ENCODE measurements at regions of chr3 and their contacts with region 1.

Region 1: DNA sequence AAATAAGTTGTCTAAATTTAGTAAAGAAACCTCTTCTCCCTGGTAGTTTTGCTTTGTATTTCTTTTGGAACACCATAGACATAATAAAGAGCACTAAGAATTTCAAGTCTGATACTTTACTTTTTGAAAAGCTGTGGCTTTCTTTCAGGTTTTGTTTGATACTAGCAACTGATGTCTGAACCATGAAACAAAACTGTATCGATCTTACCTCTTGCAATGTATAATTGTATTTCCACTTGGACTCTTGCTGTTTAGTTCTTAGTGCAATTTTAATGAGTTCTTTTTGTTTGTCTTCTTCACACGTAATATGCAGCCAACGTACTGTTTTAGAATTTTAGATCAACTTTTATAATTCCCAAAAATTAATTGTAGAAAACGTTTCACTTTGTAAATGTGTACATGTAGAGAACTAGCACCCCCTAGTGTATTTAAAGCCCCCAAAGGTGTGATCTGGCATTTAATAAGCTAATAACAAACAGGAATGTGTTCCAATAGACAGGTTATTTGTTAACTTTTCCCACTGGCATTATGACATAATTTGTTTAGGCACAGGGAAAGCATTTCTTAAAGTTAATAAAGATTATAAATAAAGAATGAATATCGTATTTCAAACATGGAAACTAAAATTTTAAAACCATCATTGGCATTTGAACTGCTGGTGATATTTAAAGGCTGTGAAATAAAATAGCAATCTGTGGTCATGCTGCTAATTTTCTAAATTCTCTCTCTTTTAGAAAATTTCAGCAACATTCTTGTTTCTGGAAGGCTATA is 289.1 kb upstream of the DNAJC19 start:
- DNase-seq: peak in 1 of 14 experiments; percentile 15
- ATAC-seq: no peak
- H3K4me3 ChIP-seq: no peak overlapping the region
- H3K4me3 Mint-ChIP-seq: no peak overlapping the region
- H3K27ac ChIP-seq: no peak overlapping the region
- H3K27ac Mint-ChIP-seq: no peak overlapping the region
- H3K4me1 ChIP-seq: no peaks in the 10 kb centered on the region
- H3K4me1 Mint-ChIP-seq: no peaks in the 10 kb centered on the region
- H3K27me3 ChIP-seq: no peaks in the 10 kb centered on the region
- H3K27me3 Mint-ChIP-seq: peaks cover 14% of the 10 kb centered on the region
- CTCF ChIP-seq: no peak

Region 2: GRCh38 chr3:179929091-179929529 is 1349.5 kb before region 1 on chr3:
- CTCF ChIA-PET with region 1: no interaction called
- POLR2A ChIA-PET with region 1: no interaction called
- intact Hi-C with region 1: loop called (anchors 5 to 10 kb)
- DNase-seq: peak in 13 of 14 experiments; percentile 5 to 52 (median 13)
- ATAC-seq: peak; percentile 34
- H3K4me3 ChIP-seq: no peak overlapping the region
- H3K4me3 Mint-ChIP-seq: no peak overlapping the region
- H3K27ac ChIP-seq: no peak overlapping the region
- H3K27ac Mint-ChIP-seq: no peak overlapping the region
- H3K4me1 ChIP-seq: no peaks in the 10 kb centered on the region
- H3K4me1 Mint-ChIP-seq: peaks cover 7% of the 10 kb centered on the region
- H3K27me3 ChIP-seq: peaks cover 0 to 3% of the 10 kb centered on the region in 2 experiments
- H3K27me3 Mint-ChIP-seq: peaks cover 4% of the 10 kb centered on the region
- CTCF ChIP-seq: peak; percentile 71